A673 (cell line): ENCODE measurements at regions of chr5 and their contacts with region 1.

Region 1: DNA sequence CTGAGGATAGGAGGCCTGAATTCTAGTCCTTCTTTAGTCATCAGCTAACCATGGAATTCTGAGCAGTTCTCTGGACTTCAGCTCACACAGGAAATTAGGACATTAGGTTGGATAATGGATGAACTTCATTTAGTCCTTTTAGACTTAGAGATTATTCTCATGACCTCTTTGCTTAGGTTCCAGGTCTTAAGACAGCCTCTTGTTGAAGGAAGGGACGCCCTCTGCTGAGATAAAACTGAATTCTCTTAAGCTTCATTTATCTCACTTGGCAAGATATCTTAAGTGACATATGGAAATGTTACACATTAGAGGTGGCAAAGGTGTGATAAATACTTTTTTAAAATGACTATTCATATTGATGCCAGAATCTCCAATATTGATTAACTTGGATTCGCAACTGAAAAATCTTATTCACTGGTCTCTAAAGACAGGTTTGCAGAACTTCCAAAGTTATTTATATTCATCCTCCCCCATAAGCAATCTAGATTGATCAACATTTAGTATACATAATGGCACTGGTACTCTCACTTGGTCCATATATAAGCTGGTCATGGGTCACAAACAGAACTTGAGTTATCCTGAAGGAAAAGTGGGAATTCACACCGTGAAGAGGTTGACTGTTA is 16.9 kb upstream of the ZNF366 start:
- DNase-seq: peak; percentile 68
- H3K4me3 ChIP-seq: no peak overlapping the region
- H3K27ac ChIP-seq: no peak overlapping the region
- H3K4me1 ChIP-seq: no peaks in the 10 kb centered on the region
- H3K27me3 ChIP-seq: no peaks in the 10 kb centered on the region
- CTCF ChIP-seq: peak; percentile 70

Region 2: GRCh38 chr5:72366324-72366976 is 157.6 kb before region 1 on chr5:
- CTCF ChIA-PET with region 1: interaction called, 19 read pairs
- POLR2A ChIA-PET with region 1: no interaction called
- intact Hi-C with region 1: loop called (anchors 2 kb)
- DNase-seq: peak; percentile 72
- H3K4me3 ChIP-seq: no peak overlapping the region
- H3K27ac ChIP-seq: no peak overlapping the region
- H3K4me1 ChIP-seq: peaks cover 2% of the 10 kb centered on the region
- H3K27me3 ChIP-seq: no peaks in the 10 kb centered on the region
- CTCF ChIP-seq: peak; percentile 80

Region 3: DNA sequence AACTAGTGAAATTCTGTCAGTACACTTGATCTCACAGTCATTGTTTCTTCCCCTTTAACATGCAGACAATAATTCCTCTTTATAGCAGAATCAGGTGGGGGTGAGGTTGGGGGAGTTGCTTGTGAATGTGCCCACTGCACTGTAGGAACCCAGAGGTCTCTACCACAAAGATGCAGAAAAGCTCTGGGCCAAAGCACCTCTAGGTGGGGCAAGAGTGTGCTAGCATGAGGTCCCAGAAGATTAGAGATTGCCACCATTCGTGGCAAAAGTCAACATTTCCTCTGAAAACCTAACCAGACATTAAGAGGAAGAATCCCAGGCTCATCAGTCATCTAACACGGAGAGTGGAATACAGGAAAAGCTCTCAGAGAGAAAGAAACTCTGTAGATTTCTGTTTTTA is 129.4 kb before region 1 on chr5:
- CTCF ChIA-PET with region 1: no interaction called
- POLR2A ChIA-PET with region 1: no interaction called
- intact Hi-C with region 1: loop called (anchors 10 kb)
- DNase-seq: peak; percentile 14
- H3K4me3 ChIP-seq: no peak overlapping the region
- H3K27ac ChIP-seq: no peak overlapping the region
- H3K4me1 ChIP-seq: peaks cover 3% of the 10 kb centered on the region
- H3K27me3 ChIP-seq: peaks cover 14% of the 10 kb centered on the region
- CTCF ChIP-seq: peak; percentile 43; the same call in 1 of the 2 replicates

Region 4: DNA sequence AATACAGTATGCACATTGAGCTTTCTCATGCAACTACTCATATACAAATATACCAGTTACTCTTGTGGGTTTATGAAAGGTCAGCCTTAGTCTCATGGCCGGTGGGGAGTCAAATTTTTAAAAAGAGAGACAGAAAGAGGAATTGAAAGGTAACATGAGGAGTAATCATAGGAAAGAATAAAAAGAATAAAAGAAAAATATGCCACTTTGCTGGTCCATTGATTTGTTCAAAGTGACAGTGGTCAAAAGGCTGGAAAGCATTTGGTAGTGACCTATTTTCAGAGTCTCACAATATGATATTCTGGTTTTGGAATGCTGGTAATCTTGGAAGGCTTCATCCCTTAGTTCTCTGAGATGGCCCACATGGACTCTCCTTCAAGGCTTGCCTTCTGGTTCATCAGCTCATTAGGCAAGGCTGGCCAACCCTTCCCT is 83.8 kb before region 1 on chr5:
- CTCF ChIA-PET with region 1: no interaction called
- POLR2A ChIA-PET with region 1: no interaction called
- intact Hi-C with region 1: no loop called
- DNase-seq: no peak
- H3K4me3 ChIP-seq: no peak overlapping the region
- H3K27ac ChIP-seq: no peak overlapping the region
- H3K4me1 ChIP-seq: no peaks in the 10 kb centered on the region
- H3K27me3 ChIP-seq: no peaks in the 10 kb centered on the region
- CTCF ChIP-seq: no peak